AG04450 (cell line): ENCODE measurements at regions of chr7 and their contacts with region 1.

Region 1: DNA sequence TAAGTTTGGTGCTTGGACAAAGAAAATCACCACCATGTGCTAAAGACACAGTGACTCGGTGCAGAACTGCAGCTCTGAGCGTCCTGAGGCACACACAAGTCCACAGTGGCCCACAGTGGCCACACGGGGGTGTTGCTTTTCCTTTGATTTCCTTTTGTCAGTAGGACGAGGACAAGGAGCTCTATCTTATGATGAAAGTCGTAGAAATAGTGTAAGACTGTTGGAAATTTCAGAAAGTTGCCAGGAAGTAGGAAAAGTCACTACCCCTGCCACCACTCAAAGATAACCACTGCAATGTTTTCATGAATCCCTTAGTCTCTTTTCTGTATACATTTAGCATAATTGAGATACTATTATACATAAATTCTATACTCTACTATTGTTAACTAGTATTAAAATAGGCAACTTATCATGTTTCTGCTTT is 146.0 kb downstream of the TNS3 start:
- DNase-seq: peak; percentile 47
- H3K4me3 ChIP-seq: no peak overlapping the region
- H3K27ac ChIP-seq: no peak overlapping the region
- H3K27me3 ChIP-seq: no peaks in the 10 kb centered on the region
- CTCF ChIP-seq: peak; percentile 66

Region 2: GRCh38 chr7:47422611-47423010 is 13.3 kb before region 1 on chr7:
- CTCF ChIA-PET with region 1: interaction called, 18 read pairs
- POLR2A ChIA-PET with region 1: no interaction called
- DNase-seq: no peak
- H3K4me3 ChIP-seq: no peak overlapping the region
- H3K27ac ChIP-seq: peak overlapping the region; percentile 23
- H3K27me3 ChIP-seq: no peaks in the 10 kb centered on the region
- CTCF ChIP-seq: no peak

Region 3: GRCh38 chr7:47470567-47471359 is 34.9 kb after region 1 on chr7:
- CTCF ChIA-PET with region 1: no interaction called
- POLR2A ChIA-PET with region 1: no interaction called
- DNase-seq: no peak
- H3K4me3 ChIP-seq: no peak overlapping the region
- H3K27ac ChIP-seq: no peak overlapping the region
- H3K27me3 ChIP-seq: no peaks in the 10 kb centered on the region
- CTCF ChIP-seq: no peak